Activated CD8-positive, alpha-beta T cell treated with anti-CD3 and anti-CD28 coated beads for 36 hours (primary cell): ENCODE measurements at regions of chr12 and their contacts with region 1.

Region 1: DNA sequence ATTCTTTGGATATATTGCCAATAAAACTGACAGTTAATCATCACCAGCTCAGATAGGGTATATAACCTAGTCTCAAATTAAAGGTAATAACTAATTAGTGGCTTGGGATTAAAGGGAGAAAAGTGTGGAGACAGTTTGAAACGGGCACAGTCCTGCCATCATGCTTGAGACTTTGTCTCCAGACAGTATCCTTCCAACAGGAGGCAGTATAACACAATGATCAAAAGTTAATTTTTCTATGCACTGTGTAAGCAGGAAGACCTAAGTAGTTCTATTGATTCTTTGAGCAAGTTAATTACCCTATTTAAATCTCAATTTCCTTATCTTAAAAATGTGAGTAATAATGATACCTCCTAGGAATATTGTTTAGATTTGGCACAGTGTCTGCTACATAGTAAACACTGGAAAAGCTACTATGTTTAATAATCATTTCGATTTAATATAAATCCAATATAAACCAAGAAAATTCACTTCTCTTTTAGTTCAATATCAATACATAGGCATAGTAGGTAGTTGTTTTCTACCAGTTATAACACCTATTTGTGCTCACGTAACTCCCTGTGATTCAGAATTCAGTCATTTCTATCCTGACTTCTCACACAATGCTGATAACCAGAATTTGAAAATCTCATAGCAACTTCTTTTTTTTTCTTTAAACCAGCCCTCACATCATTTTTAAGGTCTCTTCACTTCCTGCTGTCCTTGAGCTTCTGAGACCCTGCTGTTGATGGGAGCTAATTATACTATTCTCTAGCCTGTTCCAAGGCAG is 53.7 kb downstream of the GALNT4 start:
- DNase-seq: no peak
- ATAC-seq: peak; percentile 43
- H3K4me3 Mint-ChIP-seq: no peak overlapping the region
- H3K27ac Mint-ChIP-seq: peak overlapping the region; percentile 80
- H3K4me1 Mint-ChIP-seq: peaks cover 65% of the 10 kb centered on the region
- H3K27me3 Mint-ChIP-seq: no peaks in the 10 kb centered on the region
- CTCF ChIP-seq: peak; percentile 62

Region 2: GRCh38 chr12:89051065-89051677 is 419.8 kb before region 1 on chr12:
- CTCF ChIA-PET with region 1: interaction called, 11 read pairs
- POLR2A ChIA-PET with region 1: no interaction called
- intact Hi-C with region 1: loop called (anchors 2 kb)
- DNase-seq: peak; percentile 26
- ATAC-seq: peak; percentile 74
- H3K4me3 Mint-ChIP-seq: no peak overlapping the region
- H3K27ac Mint-ChIP-seq: no peak overlapping the region
- H3K4me1 Mint-ChIP-seq: peaks cover 1% of the 10 kb centered on the region
- H3K27me3 Mint-ChIP-seq: peaks cover 2% of the 10 kb centered on the region
- CTCF ChIP-seq: peak; percentile 87

Region 3: GRCh38 chr12:89524541-89525285 is 53.8 kb after region 1 on chr12 and contains the start of gene GALNT4:
- CTCF ChIA-PET with region 1: interaction called, 80 read pairs
- POLR2A ChIA-PET with region 1: interaction called, 7 read pairs
- intact Hi-C with region 1: loop called (anchors 2 kb)
- DNase-seq: peak; percentile 80
- ATAC-seq: peak; percentile 59
- H3K4me3 Mint-ChIP-seq: peak within 1 kb of the TSS; percentile 98
- H3K27ac Mint-ChIP-seq: peak within 1 kb of the TSS; percentile 99
- H3K4me1 Mint-ChIP-seq: peaks cover 58% of the 10 kb centered on the region
- H3K27me3 Mint-ChIP-seq: no peaks in the 10 kb centered on the region
- CTCF ChIP-seq: peak; percentile 65
- total RNA-seq, gene GALNT4: 5.9 to 6.4 TPM

Region 4: GRCh38 chr12:89529738-89530137 is 58.8 kb after region 1 on chr12:
- CTCF ChIA-PET with region 1: interaction called, 80 read pairs
- POLR2A ChIA-PET with region 1: interaction called, 7 read pairs
- intact Hi-C with region 1: loop called (anchors 2 kb)
- DNase-seq: no peak
- ATAC-seq: peak; percentile 25
- H3K4me3 Mint-ChIP-seq: no peak overlapping the region
- H3K27ac Mint-ChIP-seq: peak overlapping the region; percentile 7
- H3K4me1 Mint-ChIP-seq: peaks cover 26% of the 10 kb centered on the region
- H3K27me3 Mint-ChIP-seq: no peaks in the 10 kb centered on the region
- CTCF ChIP-seq: peak; percentile 74